Prostate gland (tissue), 2 donors: ENCODE measurements at regions of chr22 and their contacts with region 1.

Region 1: GRCh38 chr22:46027192-46028105 is 50.5 kb upstream of the WNT7B start:
- DNase-seq: no peak
- H3K4me3 ChIP-seq: peak overlapping the region; percentile 38 to 40
- H3K27ac ChIP-seq: peak overlapping the region; percentile 10 to 35
- H3K4me1 ChIP-seq: no peaks in the 10 kb centered on the region
- H3K27me3 ChIP-seq: no peaks in the 10 kb centered on the region
- CTCF ChIP-seq: peak in 2 of 4 experiments; percentile 20 to 44
- POLR2A ChIP-seq: no peak

Region 2: GRCh38 chr22:45903355-45904149 is 123.9 kb before region 1 on chr22:
- intact Hi-C with region 1: no loop called
- DNase-seq: peak; percentile 26
- H3K4me3 ChIP-seq: no peak overlapping the region
- H3K27ac ChIP-seq: no peak overlapping the region
- H3K4me1 ChIP-seq: no peaks in the 10 kb centered on the region
- H3K27me3 ChIP-seq: no peaks in the 10 kb centered on the region
- CTCF ChIP-seq: no peak
- POLR2A ChIP-seq: no peak

Region 3: GRCh38 chr22:46013460-46014416 is 13.7 kb before region 1 on chr22:
- intact Hi-C with region 1: loop called (anchors 2 kb)
- DNase-seq: peak; percentile 89
- H3K4me3 ChIP-seq: peak overlapping the region; percentile 48 to 53
- H3K27ac ChIP-seq: peak overlapping the region; percentile 97 to 99
- H3K4me1 ChIP-seq: peaks cover under 1% of the 10 kb centered on the region
- H3K27me3 ChIP-seq: no peaks in the 10 kb centered on the region
- CTCF ChIP-seq: peak; percentile 26 to 80 (median 70)
- POLR2A ChIP-seq: peak; percentile 83